OCI-LY7 (cell line): ENCODE measurements at regions of chr17 and their contacts with region 1.

Region 1: DNA sequence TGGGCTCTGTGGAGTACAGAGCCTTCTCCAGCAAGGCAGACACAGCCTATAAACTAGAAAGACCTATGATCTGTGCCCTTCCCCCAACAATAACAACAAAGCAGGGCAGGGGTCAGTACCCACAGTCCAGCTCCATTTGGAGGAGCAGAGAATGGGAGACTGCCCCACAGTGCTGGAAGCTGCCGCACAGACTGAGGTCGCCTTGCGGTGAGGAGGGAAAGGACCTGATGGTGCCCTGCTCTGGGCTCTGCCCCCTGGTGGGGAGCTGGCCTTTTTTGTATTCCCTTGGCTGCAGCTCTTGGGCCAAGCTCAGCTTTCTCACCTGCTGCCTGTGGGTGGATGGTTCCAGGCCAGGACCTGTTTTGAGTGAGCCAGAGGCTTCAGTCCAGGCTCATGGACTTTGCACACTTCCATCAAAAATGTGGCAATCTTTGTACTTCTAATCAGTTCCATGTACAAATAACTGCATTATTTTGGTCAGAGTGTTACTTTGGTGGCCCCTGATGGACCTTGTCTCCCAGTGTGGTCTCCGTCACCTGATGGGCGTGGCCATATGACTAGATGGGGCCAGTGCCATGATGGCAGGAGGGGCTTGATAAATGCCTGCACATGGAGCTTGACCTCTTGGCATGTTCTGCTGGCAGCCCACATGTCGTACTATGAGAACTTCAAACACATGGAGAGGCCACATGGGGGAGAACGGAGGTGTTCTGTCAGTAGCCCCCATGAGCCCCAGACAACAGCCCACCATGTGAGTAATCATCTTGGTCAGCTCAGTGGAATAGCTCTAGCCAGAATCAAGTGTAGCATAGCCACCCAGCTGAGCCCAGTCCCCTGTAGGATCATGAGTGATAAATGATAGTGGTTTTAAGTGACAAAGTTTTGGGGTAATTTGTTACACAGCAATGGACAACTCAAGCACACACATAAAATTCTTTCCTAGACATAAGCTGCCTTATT is 24.2 kb downstream of the B9D1 start:
- DNase-seq: peak; percentile 81
- H3K4me3 ChIP-seq: no peak overlapping the region
- H3K27ac ChIP-seq: no peak overlapping the region
- H3K4me1 ChIP-seq: peaks cover 3% of the 10 kb centered on the region
- CTCF ChIP-seq: peak; percentile 85

Region 2: DNA sequence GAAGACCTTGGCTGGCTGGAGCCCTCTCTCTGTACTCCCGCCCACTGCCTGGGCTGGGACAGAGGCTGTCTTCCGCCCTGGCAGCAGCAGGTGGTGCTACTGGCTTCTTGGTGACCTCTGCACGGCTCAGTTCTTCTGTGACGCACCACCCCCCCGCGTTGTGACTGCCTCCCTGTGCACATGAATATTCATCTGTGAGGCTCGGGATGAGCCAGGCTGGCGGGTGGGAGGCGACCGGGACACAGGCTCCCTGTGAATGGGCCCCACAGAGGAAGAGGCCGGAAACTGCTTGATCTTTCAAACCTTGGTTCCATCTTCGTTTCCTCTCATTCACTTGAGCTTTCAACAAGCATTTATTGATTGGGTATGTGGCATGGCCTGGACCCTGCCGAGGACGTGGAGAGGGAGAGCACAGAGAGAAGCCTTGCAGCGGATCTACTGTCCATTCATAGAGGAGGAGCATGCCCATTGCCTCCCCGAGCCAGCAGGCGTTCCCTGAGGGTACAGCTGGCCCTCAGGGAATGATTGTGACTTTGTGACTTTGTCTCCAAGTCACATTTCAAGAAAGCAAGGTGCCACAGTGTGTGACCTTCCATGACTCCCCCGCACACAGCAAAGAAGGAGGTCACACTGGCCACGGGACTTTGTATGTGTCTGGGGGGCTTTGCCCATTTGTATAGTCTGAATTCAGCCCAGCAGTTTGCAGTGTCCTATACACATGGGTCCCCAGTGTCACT is 20.8 kb before region 1 on chr17:
- CTCF ChIA-PET with region 1: interaction called, 3 read pairs
- POLR2A ChIA-PET with region 1: no interaction called
- intact Hi-C with region 1: loop called (anchors 1 kb)
- DNase-seq: peak; percentile 91
- H3K4me3 ChIP-seq: peak overlapping the region; percentile 36
- H3K27ac ChIP-seq: peak overlapping the region; percentile 45
- H3K4me1 ChIP-seq: peaks cover 37% of the 10 kb centered on the region
- CTCF ChIP-seq: peak; percentile 75